Breast epithelium (tissue), 4 donors: ENCODE measurements at regions of chr18 and their contacts with region 1.

Region 1: DNA sequence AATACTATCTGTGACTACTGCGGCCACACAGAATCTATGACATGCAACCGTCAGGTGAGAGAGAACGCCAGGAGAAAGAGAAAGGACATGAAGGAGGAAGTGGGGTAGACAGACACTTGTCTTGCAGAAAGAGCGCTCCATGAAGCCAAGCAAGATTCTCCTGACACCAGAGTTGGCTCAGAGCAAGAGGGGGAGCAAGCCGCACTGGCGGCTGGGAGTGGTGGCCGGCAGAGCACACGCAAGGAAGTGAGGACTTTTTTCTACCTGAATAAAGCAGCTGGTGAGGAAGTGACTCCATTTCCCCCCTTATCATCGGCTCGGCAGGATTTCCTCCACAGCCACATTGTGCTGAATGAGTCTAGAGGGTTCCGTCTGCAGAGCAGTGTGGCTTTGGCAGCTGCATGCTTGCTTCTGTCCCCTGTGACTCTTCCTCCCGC is 181.6 kb downstream of the BCL2 start:
- DNase-seq: no peak
- H3K4me3 ChIP-seq: peak overlapping the region; percentile 9 to 41 (median 12)
- H3K27ac ChIP-seq: peak overlapping the region; percentile 45 to 55
- H3K4me1 ChIP-seq: peaks cover 0 to 4% of the 10 kb centered on the region in 2 donors
- H3K27me3 ChIP-seq: no peaks in the 10 kb centered on the region
- CTCF ChIP-seq: no peak
- POLR2A ChIP-seq: no peak

Region 2: GRCh38 chr18:63224630-63225029 is 86.6 kb after region 1 on chr18:
- intact Hi-C with region 1: loop called (anchors 10 kb)
- DNase-seq: no peak
- H3K4me3 ChIP-seq: no peak overlapping the region
- H3K27ac ChIP-seq: peak overlapping the region; percentile 30 to 48
- H3K4me1 ChIP-seq: no peaks in the 10 kb centered on the region
- H3K27me3 ChIP-seq: no peaks in the 10 kb centered on the region
- CTCF ChIP-seq: no peak
- POLR2A ChIP-seq: no peak

Region 3: DNA sequence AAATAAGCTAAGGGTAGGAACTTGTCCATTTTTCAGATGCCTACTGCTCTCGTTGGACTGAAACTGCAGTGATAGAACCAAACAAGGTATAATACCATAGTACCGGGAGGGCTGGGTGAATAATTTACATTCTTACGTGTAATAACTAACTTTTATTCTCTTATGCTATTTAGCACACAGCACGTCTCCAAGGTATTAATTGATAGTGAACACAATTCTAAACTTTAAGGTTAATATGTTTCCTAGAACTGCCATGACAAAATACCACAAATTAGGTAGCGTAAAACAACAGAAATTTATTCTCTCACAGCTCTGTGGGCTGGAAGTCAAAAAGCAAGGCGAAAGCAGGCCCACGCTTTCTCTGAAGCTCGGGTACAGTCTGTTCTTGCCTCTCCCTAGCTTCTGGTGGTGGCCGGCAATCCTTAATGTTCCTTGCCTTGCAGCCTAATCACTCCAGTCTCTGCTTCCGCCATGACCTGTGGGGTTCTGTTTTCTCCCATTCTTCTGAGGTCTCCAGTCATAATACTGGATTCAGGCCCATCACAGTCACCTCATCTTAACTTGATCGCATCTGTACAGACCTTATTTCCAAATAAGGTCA is 187.2 kb after region 1 on chr18:
- intact Hi-C with region 1: loop called (anchors 2 kb)
- DNase-seq: no peak
- H3K4me3 ChIP-seq: no peak overlapping the region
- H3K27ac ChIP-seq: no peak overlapping the region
- H3K4me1 ChIP-seq: peaks cover 0 to 9% of the 10 kb centered on the region in 2 donors
- H3K27me3 ChIP-seq: no peaks in the 10 kb centered on the region
- CTCF ChIP-seq: no peak
- POLR2A ChIP-seq: no peak